ENCODE measurements at regions of chr2 and their contacts with region 1.

Region 1: DNA sequence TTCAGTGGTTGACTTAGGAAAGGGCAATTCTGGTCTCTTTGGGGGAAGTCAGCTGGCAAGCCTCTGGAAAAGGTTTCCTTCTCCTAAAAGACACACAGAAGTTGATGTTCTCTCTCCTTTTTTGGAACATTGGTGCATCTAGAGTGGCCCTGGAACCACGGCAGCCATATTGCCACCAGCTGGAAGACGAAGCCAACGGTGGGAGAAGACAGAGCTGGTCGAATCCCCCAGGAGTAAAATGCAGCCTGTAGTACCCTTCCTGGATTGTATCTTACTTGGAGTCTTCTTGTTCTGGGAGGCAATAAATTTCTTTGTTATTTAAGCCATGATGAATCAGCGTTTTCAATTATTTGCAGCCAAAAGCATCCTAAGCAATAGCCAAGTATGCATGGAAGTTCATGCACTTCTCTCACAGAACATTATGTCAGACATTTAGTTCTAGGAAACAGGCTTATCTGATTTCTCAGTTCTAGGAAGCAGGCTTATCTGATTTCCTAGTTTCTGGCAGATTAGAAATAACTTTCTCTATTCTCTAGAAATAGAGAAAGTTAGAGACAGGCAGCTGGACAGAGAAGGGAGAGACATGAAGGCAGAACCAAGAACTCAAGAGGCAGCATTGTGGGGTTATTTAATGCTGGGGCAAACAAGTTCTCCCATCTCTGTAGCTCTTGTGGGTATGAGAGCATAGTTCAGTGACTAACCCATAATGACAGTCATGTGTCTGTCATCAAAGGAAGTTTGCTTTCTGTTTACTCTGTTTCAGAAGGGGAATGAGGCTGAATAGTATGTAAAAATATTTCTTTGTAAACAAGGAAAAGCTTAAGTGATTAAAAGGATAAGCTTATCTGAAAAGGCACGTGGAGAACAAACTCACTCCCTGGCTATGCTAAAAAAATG is 40.5 kb upstream of the NABP1 start:
- DNase-seq: no peak
- H3K4me3 Mint-ChIP-seq: peak overlapping the region; percentile 32
- H3K27ac Mint-ChIP-seq: peak overlapping the region; percentile 76
- H3K4me1 Mint-ChIP-seq: peaks cover 50% of the 10 kb centered on the region
- H3K27me3 Mint-ChIP-seq: no peaks in the 10 kb centered on the region
- CTCF ChIP-seq: no peak

Region 2: DNA sequence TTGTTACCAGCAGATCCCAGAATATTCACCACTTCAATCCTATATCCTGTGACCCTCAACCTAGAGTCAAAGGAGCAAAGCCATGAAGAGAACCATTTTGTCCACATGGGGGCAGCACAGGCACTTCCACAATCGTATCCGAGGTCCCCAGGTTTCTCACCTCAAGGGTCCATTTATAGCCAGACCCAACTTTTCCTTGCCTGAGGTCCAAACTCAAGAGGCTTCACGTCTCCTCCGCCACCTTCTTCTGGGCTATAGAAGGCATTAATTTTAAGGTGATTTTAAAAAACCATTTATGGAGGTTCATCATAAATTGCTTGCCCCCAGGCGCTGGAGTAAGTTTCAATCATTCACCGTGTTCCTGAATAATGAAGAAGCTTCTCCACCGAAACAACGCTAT is 71.1 kb before region 1 on chr2:
- CTCF ChIA-PET with region 1: no interaction called
- intact Hi-C with region 1: loop called (anchors 5 kb)
- DNase-seq: peak; percentile 77
- H3K4me3 Mint-ChIP-seq: no peak overlapping the region
- H3K27ac Mint-ChIP-seq: no peak overlapping the region
- H3K4me1 Mint-ChIP-seq: peaks cover 19% of the 10 kb centered on the region
- H3K27me3 Mint-ChIP-seq: no peaks in the 10 kb centered on the region
- CTCF ChIP-seq: peak; percentile 88

Region 3: DNA sequence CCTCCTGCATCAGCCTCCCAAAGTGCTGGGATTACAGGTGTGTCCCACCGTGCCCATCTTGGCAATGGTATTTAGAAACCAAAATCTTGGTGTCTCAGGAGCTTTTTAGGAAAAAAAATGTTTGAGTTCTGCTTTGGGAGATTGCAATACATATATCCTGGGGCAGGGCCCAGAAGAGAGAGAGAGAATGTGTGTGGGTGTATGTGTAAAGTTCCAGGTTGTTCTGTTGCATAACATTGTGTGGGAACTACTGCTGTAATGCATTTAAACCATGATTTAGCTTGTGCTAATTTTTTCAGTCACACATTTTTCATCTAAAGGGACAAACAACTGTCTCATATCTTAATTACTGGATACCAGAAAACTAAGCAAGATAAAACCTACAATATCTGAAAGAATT is 30.3 kb before region 1 on chr2:
- CTCF ChIA-PET with region 1: no interaction called
- intact Hi-C with region 1: no loop called
- DNase-seq: no peak
- H3K4me3 Mint-ChIP-seq: no peak overlapping the region
- H3K27ac Mint-ChIP-seq: no peak overlapping the region
- H3K4me1 Mint-ChIP-seq: no peaks in the 10 kb centered on the region
- H3K27me3 Mint-ChIP-seq: no peaks in the 10 kb centered on the region
- CTCF ChIP-seq: no peak

Region 4: DNA sequence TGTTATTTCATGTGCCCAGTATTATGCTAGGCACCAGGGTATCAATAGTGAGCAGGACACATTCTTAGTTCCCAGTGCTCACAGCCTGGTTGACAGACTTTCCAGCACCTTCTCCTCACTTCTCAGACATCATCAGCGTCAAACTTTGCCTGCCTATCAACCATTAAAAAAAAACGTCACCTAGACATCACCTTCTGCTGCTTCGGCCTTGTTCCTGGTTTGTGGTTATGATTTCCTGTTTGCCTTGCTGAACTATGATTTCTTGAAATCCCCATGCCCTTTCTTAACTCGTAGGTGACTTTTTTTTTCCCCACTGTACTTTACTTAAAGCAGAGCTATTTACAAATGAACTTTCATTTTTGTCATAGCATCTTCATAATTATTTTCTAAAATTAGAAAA is 19.9 kb before region 1 on chr2:
- CTCF ChIA-PET with region 1: interaction called, 5 read pairs
- intact Hi-C with region 1: loop called (anchors 1 kb)
- DNase-seq: peak; percentile 42
- H3K4me3 Mint-ChIP-seq: no peak overlapping the region
- H3K27ac Mint-ChIP-seq: peak overlapping the region; percentile 82
- H3K4me1 Mint-ChIP-seq: peaks cover 46% of the 10 kb centered on the region
- H3K27me3 Mint-ChIP-seq: no peaks in the 10 kb centered on the region
- CTCF ChIP-seq: no peak

Region 5: DNA sequence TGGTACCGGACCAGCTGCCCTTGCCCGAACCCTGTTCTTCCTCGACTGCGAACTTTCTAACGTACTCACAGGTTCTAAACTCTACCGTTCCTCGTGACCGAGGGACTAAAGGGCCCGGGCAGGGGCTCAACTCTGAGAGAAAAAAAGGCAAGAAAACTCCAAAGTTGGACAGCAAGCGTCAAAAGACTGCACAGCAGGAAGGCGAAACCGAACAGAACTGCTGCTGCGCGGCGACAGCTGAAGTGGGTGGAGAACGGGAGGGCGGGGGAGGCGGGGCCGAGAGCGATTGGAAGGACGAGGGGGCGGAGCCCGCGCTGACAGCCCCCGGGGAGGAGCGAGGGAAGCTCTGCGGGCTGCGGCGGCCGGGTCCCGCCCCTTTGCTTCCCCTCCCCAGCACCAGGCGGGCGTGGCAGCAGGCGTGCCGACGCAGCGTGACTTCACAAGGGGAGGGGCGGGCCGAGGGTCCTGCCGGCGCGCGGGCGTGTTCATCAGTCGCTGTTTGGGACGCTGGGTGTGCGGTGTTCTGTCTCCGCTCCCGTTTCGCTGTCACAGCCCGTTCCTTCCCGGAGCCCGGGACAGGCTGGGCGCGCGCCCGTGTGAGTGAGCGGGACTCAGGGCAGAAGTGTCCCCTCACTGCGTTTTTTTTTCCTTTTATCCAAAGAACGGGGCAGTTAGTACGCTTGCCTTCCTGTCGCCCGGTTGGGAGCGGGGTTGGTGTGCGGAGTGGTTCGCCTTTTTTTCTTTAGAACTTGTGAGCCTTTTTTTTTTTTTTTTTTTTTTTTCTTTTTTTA is 40.4 kb after region 1 on chr2 and contains the start of gene NABP1:
- CTCF ChIA-PET with region 1: no interaction called
- intact Hi-C with region 1: loop called (anchors 1 kb)
- DNase-seq: peak; percentile 99
- H3K4me3 Mint-ChIP-seq: peak within 1 kb of the TSS; percentile 98
- H3K27ac Mint-ChIP-seq: peak within 1 kb of the TSS; percentile 95
- H3K4me1 Mint-ChIP-seq: peaks cover 21% of the 10 kb centered on the region
- H3K27me3 Mint-ChIP-seq: no peaks in the 10 kb centered on the region
- CTCF ChIP-seq: no peak
- total RNA-seq, gene NABP1: 63.9 and 71.8 TPM in 2 replicates

Region 6: GRCh38 chr2:191696001-191696400 is 58.6 kb after region 1 on chr2:
- CTCF ChIA-PET with region 1: no interaction called
- intact Hi-C with region 1: no loop called
- DNase-seq: no peak
- H3K4me3 Mint-ChIP-seq: no peak overlapping the region
- H3K27ac Mint-ChIP-seq: no peak overlapping the region
- H3K4me1 Mint-ChIP-seq: peaks cover 2% of the 10 kb centered on the region
- H3K27me3 Mint-ChIP-seq: no peaks in the 10 kb centered on the region
- CTCF ChIP-seq: no peak

Measured in Calu3 (cell line).